Mammary epithelial cell (primary cell): ENCODE measurements at regions of chr3 and their contacts with region 1.

Region 1: GRCh38 chr3:153752405-153753027 is 368.7 kb upstream of the ARHGEF26 start:
- DNase-seq: no peak
- H3K4me3 ChIP-seq: no peak overlapping the region
- H3K27ac ChIP-seq: no peak overlapping the region
- H3K4me1 ChIP-seq: no peaks in the 10 kb centered on the region
- H3K27me3 ChIP-seq: no peaks in the 10 kb centered on the region
- CTCF ChIP-seq: no peak

Region 2: GRCh38 chr3:153385343-153385742 is 367.2 kb before region 1 on chr3:
- CTCF ChIA-PET with region 1: no interaction called
- dilution Hi-C with region 1: no loop called
- in situ Hi-C with region 1: no loop called
- intact Hi-C with region 1: loop called (anchors 10 kb)
- DNase-seq: no peak
- H3K4me3 ChIP-seq: no peak overlapping the region
- H3K27ac ChIP-seq: no peak overlapping the region
- H3K4me1 ChIP-seq: no peaks in the 10 kb centered on the region
- H3K27me3 ChIP-seq: no peaks in the 10 kb centered on the region
- CTCF ChIP-seq: no peak